Heart left ventricle (tissue), 16 donors: ENCODE measurements at regions of chr1 and their contacts with region 1.

Region 1: DNA sequence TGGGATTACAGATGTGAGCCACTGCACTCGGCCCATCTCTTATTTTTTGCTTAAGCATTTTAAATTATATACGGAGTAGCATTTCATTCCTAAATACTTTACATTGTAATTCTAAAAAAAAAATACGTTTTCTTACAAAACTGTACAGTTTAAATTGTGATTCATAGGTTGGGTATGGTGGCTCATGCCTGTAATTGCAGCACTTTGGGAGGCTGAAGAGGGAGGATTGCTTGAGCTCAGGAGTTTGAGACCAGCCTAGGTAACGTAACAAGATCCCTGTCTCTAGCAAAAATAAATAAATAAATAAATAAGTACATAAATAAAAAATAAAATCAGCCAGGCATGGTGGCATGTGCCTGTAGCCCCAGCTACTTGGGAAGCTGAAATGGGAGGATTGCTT is 24.6 kb downstream of the TBCE start:
- DNase-seq: no peak
- ATAC-seq: no peak
- H3K4me3 ChIP-seq: no peak overlapping the region
- H3K27ac ChIP-seq: no peak overlapping the region
- H3K4me1 ChIP-seq: no peaks in the 10 kb centered on the region
- H3K27me3 ChIP-seq: no peaks in the 10 kb centered on the region
- CTCF ChIP-seq: no peak
- POLR2A ChIP-seq: no peak

Region 2: GRCh38 chr1:235434001-235434400 is 42.1 kb after region 1 on chr1:
- intact Hi-C with region 1: loop called in 1 of 10 experiments (anchors 2 kb)
- DNase-seq: no peak
- ATAC-seq: no peak
- H3K4me3 ChIP-seq: no peak overlapping the region
- H3K27ac ChIP-seq: no peak overlapping the region
- H3K4me1 ChIP-seq: no peaks in the 10 kb centered on the region
- H3K27me3 ChIP-seq: no peaks in the 10 kb centered on the region
- CTCF ChIP-seq: no peak
- POLR2A ChIP-seq: no peak